Posterior vena cava (tissue), 2 donors: ENCODE measurements at regions of chr1 and their contacts with region 1.

Region 1: DNA sequence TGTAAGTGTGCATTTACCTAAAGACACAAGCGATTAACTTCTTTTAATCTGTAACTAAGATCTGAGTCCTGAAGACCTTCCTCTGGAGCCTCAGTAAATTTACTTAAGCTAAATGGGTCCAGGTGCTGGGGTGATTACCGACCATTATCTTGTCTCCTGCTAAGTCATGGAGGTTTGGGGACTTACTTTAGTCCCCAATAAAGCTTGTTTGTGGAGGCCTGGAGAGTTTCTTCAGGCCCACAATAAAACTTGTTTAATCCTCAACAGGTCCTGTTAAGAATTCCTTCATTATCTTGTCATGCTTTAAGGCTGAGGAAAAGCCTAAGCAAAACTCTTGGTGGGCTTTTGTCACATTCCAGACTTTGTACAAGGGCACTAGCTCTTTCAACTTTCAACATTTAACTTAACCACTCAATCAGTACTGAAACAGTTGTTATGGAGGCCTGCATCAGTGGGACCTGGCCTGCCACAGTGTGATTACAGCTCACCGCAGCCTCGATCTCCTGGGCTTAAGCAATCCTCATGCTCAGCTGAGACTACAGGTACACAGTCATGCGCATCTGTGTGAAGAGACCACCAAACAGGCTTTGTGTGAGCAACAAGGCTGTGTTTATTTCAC is 84.0 kb downstream of the FMO4 start:
- DNase-seq: no peak

Region 2: GRCh38 chr1:171381866-171382210 is 16.1 kb before region 1 on chr1:
- intact Hi-C with region 1: loop called in 1 of 2 experiments (anchors 1 kb)
- DNase-seq: no peak

Region 3: GRCh38 chr1:171781176-171781875 is 383.4 kb after region 1 on chr1 and contains the start of gene METTL13:
- intact Hi-C with region 1: no loop called
- DNase-seq: peak; percentile 100
- total RNA-seq, gene METTL13: 14.8 to 19.4 TPM